Right ventricle myocardium inferior (tissue), 1 donor: ENCODE measurements at regions of chr3 and their contacts with region 1.

Region 1: GRCh38 chr3:151227807-151228665 is 25.0 kb upstream of the GPR171 start:
- DNase-seq: peak; percentile 68
- ATAC-seq: peak; percentile 87

Region 2: DNA sequence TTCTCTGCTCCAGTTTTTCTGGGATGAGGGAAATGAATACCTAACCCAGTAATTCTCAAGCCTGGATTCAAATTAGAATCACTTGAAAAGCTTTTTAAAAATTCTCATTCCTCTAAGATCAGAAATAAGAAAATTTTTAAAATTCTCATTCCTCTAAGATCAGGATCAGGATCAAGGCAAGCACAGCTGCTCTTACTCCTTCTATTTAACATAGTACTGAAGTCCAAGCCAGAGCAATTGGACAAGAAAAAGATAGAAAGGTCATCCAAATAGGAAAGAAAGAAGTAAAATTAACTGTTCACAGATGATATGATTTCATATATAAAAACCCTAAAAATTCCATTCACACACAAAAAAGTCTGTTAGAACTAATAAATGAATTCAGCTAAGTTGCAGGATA is 231.3 kb before region 1 on chr3:
- intact Hi-C with region 1: no loop called
- DNase-seq: no peak
- ATAC-seq: no peak

Region 3: GRCh38 chr3:151282921-151283320 is 54.9 kb after region 1 on chr3:
- intact Hi-C with region 1: loop called (anchors 1 kb)
- DNase-seq: no peak
- ATAC-seq: peak; percentile 33

Region 4: GRCh38 chr3:151327571-151328198 is 99.6 kb after region 1 on chr3:
- intact Hi-C with region 1: loop called (anchors 5 kb)
- DNase-seq: no peak
- ATAC-seq: no peak